Activated CD4-positive, alpha-beta T cell treated with anti-CD3 and anti-CD28 coated beads for 36 hours (primary cell): ENCODE measurements at regions of chr21 and their contacts with region 1.

Region 1: GRCh38 chr21:14513804-14514203 is 32.3 kb downstream of the SAMSN1 start:
- DNase-seq: no peak
- ATAC-seq: no peak
- H3K4me3 Mint-ChIP-seq: no peak overlapping the region
- H3K27ac Mint-ChIP-seq: no peak overlapping the region
- H3K4me1 Mint-ChIP-seq: peaks cover 20% of the 10 kb centered on the region
- H3K27me3 Mint-ChIP-seq: no peaks in the 10 kb centered on the region

Region 2: DNA sequence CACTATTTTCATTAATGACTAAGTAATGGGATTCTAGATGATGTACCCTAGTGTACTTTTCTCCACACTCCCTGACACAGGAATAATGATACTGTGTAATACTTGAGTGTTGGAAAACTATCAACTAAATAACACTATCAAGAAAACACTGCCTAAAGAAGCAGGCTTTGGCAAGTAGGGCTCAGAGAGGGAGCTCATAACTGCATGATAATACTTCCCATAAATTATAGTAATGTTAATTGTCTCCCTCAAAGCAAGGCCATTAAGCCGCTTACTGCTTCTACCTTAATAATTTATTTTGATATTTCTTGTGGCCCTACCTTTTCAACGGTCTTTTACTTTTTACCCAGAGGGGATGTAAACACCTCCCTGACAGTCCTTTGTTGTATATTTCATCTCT is 36.7 kb before region 1 on chr21:
- CTCF ChIA-PET with region 1: no interaction called
- POLR2A ChIA-PET with region 1: no interaction called
- intact Hi-C with region 1: loop called in 1 of 2 experiments (anchors 2 kb)
- DNase-seq: no peak
- ATAC-seq: no peak
- H3K4me3 Mint-ChIP-seq: no peak overlapping the region
- H3K27ac Mint-ChIP-seq: no peak overlapping the region
- H3K4me1 Mint-ChIP-seq: peaks cover 19% of the 10 kb centered on the region
- H3K27me3 Mint-ChIP-seq: no peaks in the 10 kb centered on the region

Region 3: DNA sequence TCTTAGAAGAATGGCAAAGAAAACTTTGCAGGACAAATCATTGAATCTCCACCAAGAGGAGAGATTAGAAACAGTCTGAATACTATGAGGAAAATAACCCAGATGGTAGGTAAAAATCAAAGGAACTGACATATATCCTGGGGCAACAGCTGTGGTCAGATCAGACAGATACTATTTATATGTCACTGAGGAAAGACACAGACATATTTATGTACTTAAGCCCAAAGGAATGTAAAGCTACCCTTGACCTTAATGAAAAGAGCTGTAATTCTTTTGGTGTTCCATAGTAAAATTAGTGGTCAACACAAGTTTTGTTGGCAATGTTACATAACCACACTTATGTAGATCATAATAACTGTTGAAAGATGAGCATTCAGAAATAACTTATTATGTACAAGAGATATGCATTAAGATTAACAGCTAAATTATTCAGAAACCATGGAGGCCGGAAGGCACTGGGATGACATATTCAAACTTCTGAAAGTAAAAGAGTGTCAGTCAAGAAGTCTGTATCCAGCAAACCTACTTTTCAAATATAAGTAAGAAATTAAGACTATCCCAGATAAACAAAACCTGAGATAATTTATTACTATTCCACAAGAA is 198.4 kb after region 1 on chr21:
- CTCF ChIA-PET with region 1: no interaction called
- POLR2A ChIA-PET with region 1: no interaction called
- intact Hi-C with region 1: no loop called
- DNase-seq: no peak
- ATAC-seq: no peak
- H3K4me3 Mint-ChIP-seq: no peak overlapping the region
- H3K27ac Mint-ChIP-seq: no peak overlapping the region
- H3K4me1 Mint-ChIP-seq: no peaks in the 10 kb centered on the region
- H3K27me3 Mint-ChIP-seq: no peaks in the 10 kb centered on the region